ENCODE measurements at regions of chrX and their contacts with region 1.

Region 1: GRCh38 chrX:74291964-74292807 is 11.8 kb upstream of the ZCCHC13 start:
- DNase-seq: peak; percentile 80
- H3K4me3 ChIP-seq: peak overlapping the region; percentile 53 to 76 (median 59)
- H3K27ac ChIP-seq: peak overlapping the region; percentile 89
- H3K4me1 ChIP-seq: no peaks in the 10 kb centered on the region
- H3K27me3 ChIP-seq: no peaks in the 10 kb centered on the region
- CTCF ChIP-seq: peak in 1 of 2 donors; percentile 35

Region 2: DNA sequence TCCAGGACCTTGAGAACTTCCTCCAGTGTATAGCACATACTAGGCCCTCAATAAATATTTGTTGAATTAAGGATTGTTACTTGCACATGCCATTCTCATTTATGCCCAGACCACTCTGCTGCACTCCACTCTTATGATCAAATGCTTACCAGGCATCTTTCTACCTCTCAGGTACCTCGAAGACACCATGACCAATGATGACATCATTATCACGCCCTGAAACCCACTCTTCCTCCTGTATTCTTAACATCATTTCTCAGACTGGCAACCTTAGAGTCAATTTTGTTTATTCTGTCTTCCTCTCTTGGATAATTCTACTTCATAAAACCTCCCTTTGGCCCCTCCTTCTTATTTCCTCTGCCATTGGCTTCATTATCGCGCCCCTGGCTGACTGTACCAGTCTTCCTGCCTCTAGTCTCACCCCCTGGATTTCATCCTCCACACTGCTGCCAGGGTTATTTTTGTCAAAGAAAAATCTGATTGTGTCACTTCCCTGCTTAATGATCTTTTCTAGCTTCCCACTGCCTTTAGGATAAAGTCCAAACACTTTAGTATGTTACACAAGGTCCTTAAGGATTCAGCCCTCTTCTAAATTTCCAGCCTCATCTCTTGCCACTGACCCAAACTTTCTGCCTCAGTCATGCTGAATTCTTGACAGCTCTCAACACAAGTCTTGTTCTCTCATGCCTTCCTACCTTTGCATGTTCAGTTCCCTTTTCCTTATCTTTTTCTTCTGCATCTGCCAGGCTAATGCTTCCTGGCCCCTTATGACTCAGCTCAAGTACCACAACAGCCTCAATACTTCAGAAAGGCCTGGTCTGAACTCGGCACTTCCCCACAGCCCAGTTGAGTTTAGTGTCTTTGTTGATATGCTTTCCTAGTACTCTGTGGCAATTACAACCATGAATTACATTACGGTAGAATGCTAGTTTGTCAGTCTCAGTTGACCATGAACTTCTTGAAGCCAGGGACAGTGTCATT is 1765.4 kb before region 1 on chrX:
- CTCF ChIA-PET with region 1: no interaction called
- dilution Hi-C with region 1: no loop called
- in situ Hi-C with region 1: no loop called
- intact Hi-C with region 1: no loop called
- DNase-seq: no peak
- H3K4me3 ChIP-seq: no peak overlapping the region
- H3K27ac ChIP-seq: no peak overlapping the region
- H3K4me1 ChIP-seq: no peaks in the 10 kb centered on the region
- H3K27me3 ChIP-seq: no peaks in the 10 kb centered on the region
- CTCF ChIP-seq: no peak

Region 3: DNA sequence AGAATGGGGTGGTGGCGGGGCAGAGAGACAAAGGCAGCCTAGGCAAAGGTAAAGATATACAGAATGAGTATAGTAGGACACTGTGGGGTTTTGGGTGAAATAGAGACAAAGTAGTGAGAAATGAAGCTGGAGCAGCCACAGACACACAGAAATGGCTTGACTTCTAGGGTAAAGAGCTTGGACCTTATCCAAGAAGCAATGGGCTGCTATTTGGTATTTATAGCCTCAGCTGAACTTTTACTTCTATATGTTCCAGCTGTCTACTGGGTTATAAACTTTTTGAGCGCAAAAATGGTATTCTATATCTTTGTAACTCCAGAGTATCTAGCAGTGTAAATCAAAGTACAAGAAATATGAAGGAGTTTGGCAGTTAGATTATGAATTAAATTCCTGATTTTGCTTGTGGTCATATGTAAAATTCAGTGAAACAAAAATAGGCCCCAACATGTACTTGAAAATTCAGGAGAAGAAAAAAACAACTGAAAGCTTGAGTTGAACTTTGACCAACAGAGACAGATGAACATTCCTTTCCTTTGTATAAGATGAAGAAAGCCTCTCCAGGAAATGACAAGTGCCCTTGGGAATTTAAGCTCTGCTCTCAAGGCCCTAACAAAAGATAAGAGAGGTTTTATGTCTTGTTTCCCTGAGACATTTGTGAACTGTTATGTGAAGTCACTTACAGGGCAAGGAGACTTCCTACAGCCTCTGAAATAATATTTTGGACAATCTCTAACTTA is 375.1 kb before region 1 on chrX:
- CTCF ChIA-PET with region 1: no interaction called
- dilution Hi-C with region 1: no loop called
- in situ Hi-C with region 1: no loop called
- intact Hi-C with region 1: loop called (anchors 2 kb)
- DNase-seq: peak; percentile 77
- H3K4me3 ChIP-seq: no peak overlapping the region
- H3K27ac ChIP-seq: peak overlapping the region; percentile 60
- H3K4me1 ChIP-seq: peaks cover 30% of the 10 kb centered on the region
- H3K27me3 ChIP-seq: no peaks in the 10 kb centered on the region
- CTCF ChIP-seq: no peak

Region 4: GRCh38 chrX:74207539-74207938 is 84.6 kb before region 1 on chrX:
- CTCF ChIA-PET with region 1: no interaction called
- dilution Hi-C with region 1: no loop called
- in situ Hi-C with region 1: no loop called
- intact Hi-C with region 1: no loop called
- DNase-seq: no peak
- H3K4me3 ChIP-seq: no peak overlapping the region
- H3K27ac ChIP-seq: no peak overlapping the region
- H3K4me1 ChIP-seq: no peaks in the 10 kb centered on the region
- H3K27me3 ChIP-seq: peaks cover 2% of the 10 kb centered on the region
- CTCF ChIP-seq: no peak

Region 5: DNA sequence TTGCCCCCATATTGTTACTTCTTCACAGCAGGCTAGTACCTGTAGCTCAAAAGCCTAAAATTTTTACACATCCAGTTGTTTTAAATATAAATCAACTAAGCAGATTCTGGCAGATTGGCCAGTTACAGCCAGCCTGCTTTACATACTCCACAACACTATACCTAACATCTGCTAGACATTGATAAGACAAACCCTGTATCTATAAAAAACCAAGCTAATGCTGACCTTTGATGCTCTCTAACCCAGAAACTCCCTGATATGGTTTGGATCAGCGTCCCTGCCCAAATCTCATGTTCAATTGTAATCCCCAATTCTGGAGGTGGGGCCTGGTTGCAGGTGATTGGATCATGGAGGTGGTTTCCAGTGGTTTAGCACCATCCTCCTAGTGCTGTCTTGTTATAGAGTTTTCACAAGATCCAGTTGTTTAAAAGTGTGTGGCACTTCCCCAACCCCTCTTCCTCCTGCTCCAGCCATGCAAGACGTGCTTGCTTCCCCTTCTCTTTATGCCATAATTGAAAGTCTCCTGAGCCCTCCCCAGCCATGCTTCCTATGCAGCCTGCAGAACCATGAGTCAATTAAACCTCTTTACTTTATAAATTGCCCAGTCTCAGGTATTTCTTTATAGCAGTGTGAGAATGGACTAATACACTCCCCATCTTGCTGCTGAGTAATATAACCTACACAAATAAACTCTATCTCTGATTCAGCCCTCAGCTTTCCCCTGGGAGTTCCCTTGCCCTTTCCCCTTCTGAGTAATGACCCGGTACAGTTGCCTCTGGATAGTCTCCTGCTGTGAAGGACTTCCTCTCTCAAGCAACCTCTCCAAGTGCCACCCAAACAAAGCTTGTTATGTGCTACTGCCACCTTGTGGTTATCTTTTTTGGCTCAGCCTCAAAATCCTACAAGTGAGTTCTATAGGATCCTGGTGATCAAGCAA is 51.4 kb after region 1 on chrX:
- CTCF ChIA-PET with region 1: no interaction called
- dilution Hi-C with region 1: no loop called
- in situ Hi-C with region 1: no loop called
- intact Hi-C with region 1: loop called (anchors 1 kb)
- DNase-seq: peak; percentile 92
- H3K4me3 ChIP-seq: no peak overlapping the region
- H3K27ac ChIP-seq: no peak overlapping the region
- H3K4me1 ChIP-seq: no peaks in the 10 kb centered on the region
- H3K27me3 ChIP-seq: no peaks in the 10 kb centered on the region
- CTCF ChIP-seq: peak; percentile 63 to 65

Region 6: GRCh38 chrX:74421036-74421739 is 129.0 kb after region 1 on chrX and contains the start of gene SLC16A2:
- CTCF ChIA-PET with region 1: no interaction called
- dilution Hi-C with region 1: no loop called
- in situ Hi-C with region 1: no loop called
- intact Hi-C with region 1: loop called (anchors 1 kb)
- DNase-seq: peak; percentile 64
- H3K4me3 ChIP-seq: peak within 1 kb of the TSS; percentile 52 to 63 (median 63)
- H3K27ac ChIP-seq: peak within 1 kb of the TSS; percentile 18
- H3K4me1 ChIP-seq: no peaks in the 10 kb centered on the region
- H3K27me3 ChIP-seq: no peaks in the 10 kb centered on the region
- CTCF ChIP-seq: no peak
- total RNA-seq, gene SLC16A2: 16.2 to 45.4 TPM

Region 7: DNA sequence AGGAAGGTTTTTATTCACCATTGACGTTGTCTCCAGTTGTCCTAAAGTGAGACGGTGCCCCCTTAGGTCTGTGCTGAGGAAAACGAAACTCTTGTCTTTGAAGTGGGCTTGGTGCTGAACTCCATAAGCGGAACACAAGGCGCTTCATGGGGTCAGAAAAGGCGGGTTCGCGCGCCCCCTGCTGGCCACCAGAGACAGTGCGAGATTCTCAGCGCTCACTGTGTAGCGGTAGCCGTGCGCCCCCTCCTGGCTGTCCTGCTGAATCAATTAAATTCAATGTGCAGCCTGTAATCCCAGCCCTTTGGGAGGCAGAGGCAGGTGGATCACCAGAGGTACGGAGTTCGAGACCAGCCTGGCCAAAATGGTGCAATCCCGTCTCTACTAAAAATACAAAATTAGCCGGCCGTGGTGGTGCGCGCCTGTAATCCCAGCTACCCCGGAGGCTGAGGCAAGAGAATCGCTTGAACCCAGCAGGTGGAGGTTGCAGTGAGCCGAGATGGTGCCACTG is 258.2 kb after region 1 on chrX:
- CTCF ChIA-PET with region 1: no interaction called
- dilution Hi-C with region 1: no loop called
- in situ Hi-C with region 1: no loop called
- intact Hi-C with region 1: loop called (anchors 2 kb)
- DNase-seq: peak; percentile 53
- H3K4me3 ChIP-seq: no peak overlapping the region
- H3K27ac ChIP-seq: no peak overlapping the region
- H3K4me1 ChIP-seq: no peaks in the 10 kb centered on the region
- H3K27me3 ChIP-seq: no peaks in the 10 kb centered on the region
- CTCF ChIP-seq: peak; percentile 96